ENCODE measurements at regions of chr15 and their contacts with region 1.

Region 1: DNA sequence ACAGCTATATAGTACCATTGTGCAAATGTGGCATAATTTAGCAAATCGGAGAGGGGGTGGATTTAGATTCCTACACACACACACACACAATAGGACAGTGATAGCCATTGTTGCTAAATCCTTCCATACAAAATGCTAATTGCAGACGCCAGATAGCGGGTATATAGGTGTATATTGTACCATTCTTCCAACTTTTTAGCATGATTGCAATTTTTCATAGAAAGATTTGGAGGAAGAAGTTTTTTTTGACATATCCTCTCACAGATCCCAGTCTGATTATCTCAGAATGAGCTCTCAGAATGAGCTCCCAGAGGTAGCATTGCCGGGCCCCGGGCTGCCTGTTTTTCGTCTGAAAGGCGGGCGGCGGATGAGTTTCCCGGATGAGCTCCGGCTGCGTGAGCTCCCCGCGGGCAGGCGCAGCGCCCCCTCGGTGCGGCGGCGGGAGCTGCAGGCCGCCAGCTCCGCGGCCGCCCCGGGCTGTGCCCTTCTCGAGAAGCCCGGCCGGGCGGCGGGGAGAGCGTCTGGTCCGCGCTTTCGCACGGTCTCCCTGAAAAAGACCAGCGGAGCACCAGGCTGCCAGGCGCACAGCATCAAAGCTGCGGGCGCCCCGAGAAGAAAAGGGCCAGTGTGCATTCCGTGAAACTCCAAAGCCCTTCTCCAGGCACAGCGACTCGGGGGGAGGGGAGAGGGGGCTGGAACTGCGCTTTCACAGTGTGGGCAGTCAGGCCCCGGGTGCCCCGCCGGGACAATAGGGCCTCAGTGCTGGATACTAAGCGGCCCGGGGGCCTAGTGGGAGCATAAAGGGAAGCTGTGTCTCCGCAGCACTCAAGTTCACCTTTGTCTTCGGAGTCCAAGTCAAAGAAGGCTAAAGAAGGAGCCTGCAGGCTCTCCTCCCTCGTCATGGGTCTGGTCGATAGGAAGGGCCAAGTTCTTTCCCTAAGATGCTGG is 12.0 kb upstream of the SHC4 start:
- DNase-seq: peak; percentile 80
- H3K4me3 Mint-ChIP-seq: peak overlapping the region; percentile 39
- H3K27ac Mint-ChIP-seq: no peak overlapping the region
- H3K4me1 Mint-ChIP-seq: no peaks in the 10 kb centered on the region
- H3K27me3 Mint-ChIP-seq: peaks cover 14% of the 10 kb centered on the region

Region 2: GRCh38 chr15:48285329-48286214 is 690.2 kb before region 1 on chr15:
- CTCF ChIA-PET with region 1: no interaction called
- intact Hi-C with region 1: no loop called
- DNase-seq: peak; percentile 66
- H3K4me3 Mint-ChIP-seq: no peak overlapping the region
- H3K27ac Mint-ChIP-seq: no peak overlapping the region
- H3K4me1 Mint-ChIP-seq: peaks cover 7% of the 10 kb centered on the region
- H3K27me3 Mint-ChIP-seq: peaks cover 1% of the 10 kb centered on the region

Region 3: GRCh38 chr15:48888836-48889235 is 86.9 kb before region 1 on chr15:
- CTCF ChIA-PET with region 1: no interaction called
- intact Hi-C with region 1: no loop called
- DNase-seq: no peak
- H3K4me3 Mint-ChIP-seq: no peak overlapping the region
- H3K27ac Mint-ChIP-seq: no peak overlapping the region
- H3K4me1 Mint-ChIP-seq: no peaks in the 10 kb centered on the region
- H3K27me3 Mint-ChIP-seq: peaks cover 14% of the 10 kb centered on the region

Region 4: DNA sequence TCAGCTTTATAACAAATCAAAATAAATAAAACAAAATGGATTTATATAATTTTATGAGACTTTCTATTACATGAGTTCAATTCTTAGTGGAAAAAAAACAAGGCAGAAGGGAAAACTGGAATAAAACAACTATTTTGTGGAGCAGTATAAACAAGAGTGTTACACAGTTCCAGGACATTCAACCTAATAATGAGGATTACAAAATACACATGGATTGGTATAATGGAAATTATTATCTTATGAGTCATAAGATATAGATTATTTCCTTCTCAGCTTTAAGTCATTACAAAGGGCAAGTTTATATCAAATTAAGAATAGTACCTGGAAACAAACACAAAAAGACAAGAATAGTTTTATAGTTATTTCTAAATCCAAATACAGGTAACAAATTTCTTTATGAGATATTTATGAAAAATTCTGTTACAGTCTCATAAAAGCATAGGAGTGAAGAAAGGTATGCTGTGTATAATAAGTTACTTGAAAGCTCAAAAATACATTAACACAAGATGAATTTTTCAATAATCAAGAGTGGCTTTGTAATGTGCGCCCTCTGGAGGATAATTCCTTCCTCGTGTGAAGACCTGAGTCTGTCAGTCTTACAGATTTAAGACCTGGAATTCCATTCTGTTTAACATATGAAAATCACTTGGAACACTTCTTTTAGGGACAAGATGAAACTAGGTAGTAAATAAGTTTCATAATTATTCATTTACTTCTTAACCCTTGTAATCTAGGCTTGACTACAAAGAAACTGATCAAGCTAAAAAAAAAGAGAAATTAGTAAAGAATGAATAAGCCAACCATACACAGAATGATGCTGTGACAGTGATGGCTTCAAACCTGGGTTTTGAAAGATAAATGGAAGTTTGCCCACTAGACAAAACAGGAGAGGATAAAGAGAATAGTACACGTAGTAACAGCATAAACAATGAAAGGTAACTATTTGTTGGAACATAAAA is 170.2 kb after region 1 on chr15:
- CTCF ChIA-PET with region 1: interaction called, 10 read pairs
- intact Hi-C with region 1: no loop called
- DNase-seq: peak; percentile 52
- H3K4me3 Mint-ChIP-seq: no peak overlapping the region
- H3K27ac Mint-ChIP-seq: no peak overlapping the region
- H3K4me1 Mint-ChIP-seq: peaks cover 43% of the 10 kb centered on the region
- H3K27me3 Mint-ChIP-seq: no peaks in the 10 kb centered on the region

Region 5: DNA sequence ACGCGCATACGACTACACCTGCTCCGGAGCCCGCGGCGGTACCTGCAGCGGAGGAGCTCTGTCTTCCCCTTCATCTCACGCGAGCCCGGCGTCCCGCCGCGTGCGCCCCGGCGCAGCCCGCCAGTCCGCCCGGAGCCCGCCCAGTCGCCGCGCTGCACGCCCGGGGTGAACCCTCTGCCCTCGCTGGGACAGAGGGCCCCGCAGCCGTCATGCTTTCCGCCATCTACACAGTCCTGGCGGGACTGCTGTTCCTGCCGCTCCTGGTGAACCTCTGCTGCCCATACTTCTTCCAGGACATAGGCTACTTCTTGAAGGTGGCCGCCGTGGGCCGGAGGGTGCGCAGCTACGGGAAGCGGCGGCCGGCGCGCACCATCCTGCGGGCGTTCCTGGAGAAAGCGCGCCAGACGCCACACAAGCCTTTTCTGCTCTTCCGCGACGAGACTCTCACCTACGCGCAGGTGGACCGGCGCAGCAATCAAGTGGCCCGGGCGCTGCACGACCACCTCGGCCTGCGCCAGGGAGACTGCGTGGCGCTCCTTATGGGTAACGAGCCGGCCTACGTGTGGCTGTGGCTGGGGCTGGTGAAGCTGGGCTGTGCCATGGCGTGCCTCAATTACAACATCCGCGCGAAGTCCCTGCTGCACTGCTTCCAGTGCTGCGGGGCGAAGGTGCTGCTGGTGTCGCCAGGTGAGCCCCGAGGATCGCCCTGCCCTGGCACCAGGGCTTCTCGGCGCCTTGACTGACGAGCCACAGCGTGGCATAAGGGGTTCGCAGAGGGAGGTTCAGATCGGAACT is 1206.7 kb after region 1 on chr15:
- CTCF ChIA-PET with region 1: no interaction called
- intact Hi-C with region 1: no loop called
- DNase-seq: peak; percentile 73
- H3K4me3 Mint-ChIP-seq: peak overlapping the region; percentile 98
- H3K27ac Mint-ChIP-seq: peak overlapping the region; percentile 87
- H3K4me1 Mint-ChIP-seq: peaks cover 29% of the 10 kb centered on the region
- H3K27me3 Mint-ChIP-seq: peaks cover 25% of the 10 kb centered on the region

Measured in activated naive CD4-positive, alpha-beta T cell treated with anti-CD3 and anti-CD28 coated beads for 36 hours (primary cell).